ENCODE measurements at regions of chr11 and their contacts with region 1.

Region 1: GRCh38 chr11:75022759-75023396 is 34.1 kb downstream of the NEU3 start:
- DNase-seq: peak; percentile 79
- H3K4me3 ChIP-seq: no peak overlapping the region; a peak in 1 of 4 replicates
- H3K27ac ChIP-seq: no peak overlapping the region
- H3K4me1 ChIP-seq: peaks cover 0 to 13% of the 10 kb centered on the region in 2 experiments; a peak in 1 of 4 replicates
- H3K27me3 ChIP-seq: no peaks in the 10 kb centered on the region
- CTCF ChIP-seq: peak; percentile 96
- EP300 ChIP-seq: no peak
- RAD21 ChIP-seq: peak; percentile 95

Region 2: DNA sequence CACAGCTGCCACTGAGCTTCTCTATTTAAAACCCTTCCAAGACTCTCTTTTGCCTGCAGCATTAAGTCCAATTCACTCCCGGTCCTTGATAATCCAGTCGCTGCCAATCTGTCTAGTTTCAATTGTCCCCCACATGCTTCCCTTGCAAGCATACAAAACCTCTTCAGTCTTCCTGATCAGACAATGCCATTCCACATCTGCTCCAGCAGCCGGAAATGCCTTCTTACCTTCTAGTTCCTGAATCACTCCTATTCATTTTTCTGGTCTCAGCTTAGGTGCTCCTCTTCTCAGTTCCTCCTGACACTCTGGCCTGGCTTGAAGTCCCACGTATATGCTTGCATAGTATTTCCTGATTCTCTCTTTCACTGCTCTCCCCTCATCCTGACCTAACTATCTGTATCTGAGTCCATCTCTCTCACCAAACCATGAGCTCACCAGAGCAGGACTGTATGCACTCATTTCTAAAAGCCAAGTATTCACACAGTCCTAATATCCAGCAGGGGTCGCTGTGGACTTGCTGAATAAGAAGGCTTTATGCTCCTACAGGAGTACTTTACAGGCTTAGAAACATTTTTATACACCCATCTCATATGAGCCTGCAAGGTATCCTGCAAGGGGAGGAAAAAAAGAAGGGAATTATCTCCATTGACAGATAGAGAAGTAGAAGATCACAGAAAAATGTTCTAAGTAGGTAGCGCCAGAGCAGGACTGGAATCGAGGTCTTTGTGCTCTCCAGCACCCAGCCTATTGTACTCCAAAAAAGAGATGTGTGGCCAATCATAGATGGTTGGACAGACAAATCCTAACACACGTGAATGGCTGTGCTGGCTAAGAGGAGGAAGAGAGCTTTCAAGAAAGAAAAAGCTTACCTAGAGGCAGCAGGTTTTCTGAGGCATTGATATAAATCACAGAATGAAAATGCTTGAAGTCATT is 93.2 kb before region 1 on chr11:
- CTCF ChIA-PET with region 1: interaction called, 26 read pairs
- POLR2A ChIA-PET with region 1: no interaction called
- DNase-seq: peak; percentile 58
- H3K4me3 ChIP-seq: no peak overlapping the region
- H3K27ac ChIP-seq: no peak overlapping the region; a peak in 1 of 4 replicates
- H3K4me1 ChIP-seq: peaks cover 0 to 12% of the 10 kb centered on the region in 2 experiments; a peak in 2 of 4 replicates
- H3K27me3 ChIP-seq: no peaks in the 10 kb centered on the region
- CTCF ChIP-seq: peak; percentile 95
- EP300 ChIP-seq: no peak
- RAD21 ChIP-seq: peak; percentile 93

Region 3: GRCh38 chr11:75063732-75064314 is 40.9 kb after region 1 on chr11:
- CTCF ChIA-PET with region 1: interaction called, 11 read pairs
- POLR2A ChIA-PET with region 1: no interaction called
- DNase-seq: no peak
- H3K4me3 ChIP-seq: no peak overlapping the region
- H3K27ac ChIP-seq: no peak overlapping the region
- H3K4me1 ChIP-seq: peaks cover 0 to 2% of the 10 kb centered on the region in 2 experiments; a peak in 1 of 4 replicates
- H3K27me3 ChIP-seq: no peaks in the 10 kb centered on the region
- CTCF ChIP-seq: no peak
- EP300 ChIP-seq: no peak
- RAD21 ChIP-seq: no peak

Region 4: DNA sequence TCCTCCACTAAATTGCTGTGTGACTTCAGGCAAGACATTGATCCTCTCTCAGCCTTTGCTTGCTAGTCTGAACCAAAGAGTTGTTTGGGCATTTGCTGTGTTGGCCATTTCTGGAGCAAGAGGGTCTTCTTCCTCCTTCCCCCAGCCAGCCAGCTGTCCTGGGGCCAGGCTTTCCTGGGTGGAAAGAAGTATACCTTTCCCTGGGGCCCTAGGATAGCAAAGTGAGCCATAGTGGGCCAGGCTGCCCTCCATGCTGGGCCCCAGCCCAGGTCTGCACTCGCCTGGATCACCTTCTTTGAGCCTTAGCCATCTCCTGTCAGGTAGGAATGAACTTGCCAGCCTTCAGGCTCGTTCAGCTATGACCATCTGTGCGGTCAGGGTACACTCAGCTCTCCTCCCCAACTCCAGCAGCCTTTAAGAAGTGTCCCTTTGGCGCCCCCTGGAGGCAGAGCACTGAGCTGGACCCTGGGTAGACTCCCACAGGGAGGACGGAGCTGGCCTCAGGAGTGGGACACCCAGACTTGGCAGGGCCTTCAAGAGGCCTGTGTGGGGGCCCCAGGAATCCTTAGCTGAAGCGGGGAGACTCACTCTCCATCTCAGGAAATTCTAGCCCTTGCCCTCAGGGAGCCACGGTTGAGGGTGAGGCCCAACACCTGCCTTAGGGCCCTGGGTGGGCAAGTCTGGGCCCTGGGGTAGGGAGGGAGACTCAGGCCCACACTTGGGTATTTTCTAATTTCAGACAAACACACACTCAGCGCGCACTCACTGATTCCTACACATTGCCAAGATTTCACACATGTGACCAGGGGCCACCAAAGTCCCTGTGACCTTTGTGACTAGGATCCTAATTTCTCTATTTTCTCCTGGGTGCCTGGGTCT is 182.0 kb after region 1 on chr11:
- CTCF ChIA-PET with region 1: interaction called, 29 read pairs
- POLR2A ChIA-PET with region 1: no interaction called
- DNase-seq: peak; percentile 88
- H3K4me3 ChIP-seq: no peak overlapping the region; a peak in 1 of 4 replicates
- H3K27ac ChIP-seq: no peak overlapping the region
- H3K4me1 ChIP-seq: peaks cover 0 to 9% of the 10 kb centered on the region in 2 experiments; a peak in 1 of 4 replicates
- H3K27me3 ChIP-seq: no peaks in the 10 kb centered on the region; the same call in 1 of the 2 replicates
- CTCF ChIP-seq: peak; percentile 87
- EP300 ChIP-seq: no peak
- RAD21 ChIP-seq: peak; percentile 90

Region 5: DNA sequence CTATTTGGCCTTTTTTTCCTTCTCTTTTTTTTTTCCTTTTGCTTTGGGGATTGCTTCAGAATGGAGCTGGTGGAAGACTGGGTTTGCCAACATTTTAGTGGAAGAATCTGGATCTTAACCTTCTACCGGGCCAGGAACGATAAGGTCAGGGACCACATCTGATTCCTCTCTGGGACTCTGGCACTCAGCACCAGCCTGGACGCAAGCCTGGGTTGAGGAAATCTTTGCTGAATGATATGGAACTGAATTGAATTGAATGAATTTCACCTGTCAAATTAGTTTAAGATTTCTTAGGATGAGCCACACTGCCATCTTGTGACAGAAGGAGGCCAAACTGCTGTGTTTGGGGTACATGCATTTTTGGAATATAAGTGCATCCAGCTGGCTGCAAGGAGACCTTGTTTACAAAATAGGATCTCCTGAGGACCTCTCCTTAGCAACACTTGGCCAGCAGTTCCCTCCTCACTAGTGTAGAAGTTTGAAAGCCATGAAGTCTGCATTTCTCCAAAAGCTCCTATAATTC is 248.1 kb after region 1 on chr11:
- CTCF ChIA-PET with region 1: interaction called, 14 read pairs
- POLR2A ChIA-PET with region 1: no interaction called
- DNase-seq: no peak
- H3K4me3 ChIP-seq: no peak overlapping the region
- H3K27ac ChIP-seq: no peak overlapping the region
- H3K4me1 ChIP-seq: peaks cover 0 to 11% of the 10 kb centered on the region in 2 experiments; a peak in 1 of 4 replicates
- H3K27me3 ChIP-seq: no peaks in the 10 kb centered on the region
- CTCF ChIP-seq: peak; percentile 34; the same call in 1 of the 2 replicates
- EP300 ChIP-seq: no peak
- RAD21 ChIP-seq: peak; percentile 49

Measured in SK-N-SH (cell line).